B cell (primary cell): ENCODE measurements at regions of chr12 and their contacts with region 1.

Region 1: GRCh38 chr12:31238764-31239387 is 87.1 kb downstream of the SINHCAF start:
- DNase-seq: peak; percentile 71
- ATAC-seq: peak; percentile 64
- H3K4me3 ChIP-seq: no peak overlapping the region
- H3K4me3 Mint-ChIP-seq: no peak overlapping the region
- H3K27ac ChIP-seq: no peak overlapping the region
- H3K27ac Mint-ChIP-seq: no peak overlapping the region
- H3K4me1 ChIP-seq: no peaks in the 10 kb centered on the region
- H3K4me1 Mint-ChIP-seq: peaks cover 9% of the 10 kb centered on the region
- H3K27me3 ChIP-seq: peaks cover 0 to 4% (median 0%) of the 10 kb centered on the region in 4 experiments
- H3K27me3 Mint-ChIP-seq: peaks cover 25% of the 10 kb centered on the region
- CTCF ChIP-seq: peak; percentile 80

Region 2: DNA sequence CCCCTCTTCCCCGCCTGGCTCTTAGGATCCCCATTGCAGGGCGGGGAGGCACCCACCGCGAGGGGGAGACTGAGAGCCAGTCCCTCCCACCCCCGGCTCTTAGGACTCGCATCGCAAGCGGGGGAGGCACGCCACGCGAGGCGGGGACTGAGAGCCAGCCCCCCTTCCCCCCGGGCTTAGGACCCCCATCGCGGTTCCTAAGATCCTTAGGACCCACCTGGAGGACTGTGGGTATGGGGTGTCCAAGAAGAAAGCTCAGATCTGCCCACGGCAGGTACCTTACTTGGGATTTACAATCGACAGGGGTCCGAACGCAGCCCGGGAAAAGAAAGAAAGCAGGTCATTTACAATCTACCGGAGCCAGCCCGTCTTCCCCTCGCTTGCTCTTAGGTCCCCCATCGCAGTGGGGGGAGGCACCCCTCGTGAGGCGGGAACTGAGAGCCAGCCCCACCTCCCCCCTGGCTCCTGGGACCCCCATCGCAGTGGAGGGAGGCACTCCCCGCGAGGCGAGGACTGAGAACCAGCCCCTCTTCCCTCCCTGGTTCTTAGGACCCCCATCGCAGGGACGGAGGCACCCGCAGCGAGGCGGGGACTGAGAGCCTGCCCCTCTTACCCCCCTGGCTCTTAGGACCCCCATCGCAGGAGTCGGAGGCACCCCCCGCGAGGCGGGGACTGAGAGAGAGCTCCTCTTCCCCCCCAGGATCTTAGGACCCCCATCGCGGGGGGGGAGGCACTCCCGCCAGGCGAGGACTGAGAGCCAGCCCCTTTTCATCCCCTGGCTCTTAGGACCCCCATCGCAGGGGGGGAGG is 121.5 kb before region 1 on chr12:
- CTCF ChIA-PET with region 1: interaction called, 3 read pairs
- POLR2A ChIA-PET with region 1: no interaction called
- intact Hi-C with region 1: loop called (anchors 2 kb)
- DNase-seq: peak; percentile 83
- ATAC-seq: peak; percentile 76
- H3K4me3 ChIP-seq: peak overlapping the region in 4 of 5 experiments; percentile 37 to 65 (median 56)
- H3K4me3 Mint-ChIP-seq: peak overlapping the region; percentile 85
- H3K27ac ChIP-seq: no peak overlapping the region
- H3K27ac Mint-ChIP-seq: peak overlapping the region; percentile 41
- H3K4me1 ChIP-seq: peaks cover 28 to 32% of the 10 kb centered on the region in 2 donors
- H3K4me1 Mint-ChIP-seq: peaks cover 4% of the 10 kb centered on the region
- H3K27me3 ChIP-seq: peaks cover 0 to 34% (median 6%) of the 10 kb centered on the region in 4 experiments
- H3K27me3 Mint-ChIP-seq: peaks cover 2% of the 10 kb centered on the region
- CTCF ChIP-seq: peak; percentile 72

Region 3: DNA sequence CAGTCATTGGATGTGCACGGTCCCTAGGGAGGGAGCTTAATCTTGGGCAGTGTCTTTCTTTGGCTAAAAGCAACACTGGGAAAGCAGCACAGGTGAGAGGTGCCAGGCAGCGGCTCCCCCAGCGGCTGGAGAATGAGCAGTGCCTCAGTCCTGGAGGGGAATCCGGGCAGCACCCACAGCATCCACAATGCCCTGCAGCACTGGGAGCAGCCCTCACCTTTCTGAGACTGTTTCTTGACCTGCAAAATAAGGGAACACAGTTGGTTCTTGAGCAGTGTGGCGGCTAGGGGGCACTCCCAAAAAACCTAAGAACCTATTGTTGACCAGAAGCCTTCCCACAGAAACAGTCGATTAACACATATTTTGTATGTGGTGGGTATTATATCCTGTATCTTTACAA is 11.3 kb after region 1 on chr12:
- CTCF ChIA-PET with region 1: interaction called, 20 read pairs
- POLR2A ChIA-PET with region 1: no interaction called
- intact Hi-C with region 1: no loop called
- DNase-seq: no peak
- ATAC-seq: no peak
- H3K4me3 ChIP-seq: no peak overlapping the region
- H3K4me3 Mint-ChIP-seq: no peak overlapping the region
- H3K27ac ChIP-seq: no peak overlapping the region
- H3K27ac Mint-ChIP-seq: no peak overlapping the region
- H3K4me1 ChIP-seq: no peaks in the 10 kb centered on the region
- H3K4me1 Mint-ChIP-seq: no peaks in the 10 kb centered on the region
- H3K27me3 ChIP-seq: peaks cover 0 to 2% (median 0%) of the 10 kb centered on the region in 4 experiments
- H3K27me3 Mint-ChIP-seq: no peaks in the 10 kb centered on the region
- CTCF ChIP-seq: no peak

Region 4: DNA sequence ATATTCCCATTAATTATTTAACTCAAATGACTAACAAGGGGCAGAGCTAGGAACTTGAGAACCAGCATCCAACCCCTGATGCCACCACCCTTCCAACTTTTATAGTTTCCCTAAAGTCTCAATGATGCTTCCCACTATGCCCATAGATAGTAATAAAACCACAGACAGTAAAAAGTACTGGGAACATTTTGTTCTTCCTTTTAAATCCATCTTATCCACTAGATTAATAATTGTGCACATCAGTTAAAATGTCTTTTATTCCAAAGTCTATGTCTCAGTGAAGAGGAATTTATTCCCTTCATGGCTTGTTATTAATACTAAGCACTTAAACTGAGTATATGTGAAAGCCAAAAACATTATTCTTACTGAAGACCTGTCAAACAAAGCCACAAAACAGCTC is 41.3 kb after region 1 on chr12:
- CTCF ChIA-PET with region 1: no interaction called
- POLR2A ChIA-PET with region 1: no interaction called
- intact Hi-C with region 1: no loop called
- DNase-seq: no peak
- ATAC-seq: no peak
- H3K4me3 ChIP-seq: no peak overlapping the region
- H3K4me3 Mint-ChIP-seq: no peak overlapping the region
- H3K27ac ChIP-seq: no peak overlapping the region
- H3K27ac Mint-ChIP-seq: no peak overlapping the region
- H3K4me1 ChIP-seq: no peaks in the 10 kb centered on the region
- H3K4me1 Mint-ChIP-seq: no peaks in the 10 kb centered on the region
- H3K27me3 ChIP-seq: no peaks in the 10 kb centered on the region
- H3K27me3 Mint-ChIP-seq: no peaks in the 10 kb centered on the region
- CTCF ChIP-seq: no peak

Region 5: GRCh38 chr12:31931796-31932715 is 693.2 kb after region 1 on chr12:
- CTCF ChIA-PET with region 1: no interaction called
- POLR2A ChIA-PET with region 1: no interaction called
- intact Hi-C with region 1: no loop called
- DNase-seq: no peak
- ATAC-seq: no peak
- H3K4me3 ChIP-seq: no peak overlapping the region
- H3K4me3 Mint-ChIP-seq: no peak overlapping the region
- H3K27ac ChIP-seq: no peak overlapping the region
- H3K27ac Mint-ChIP-seq: no peak overlapping the region
- H3K4me1 ChIP-seq: peaks cover 11 to 15% of the 10 kb centered on the region in 2 donors
- H3K4me1 Mint-ChIP-seq: peaks cover 29% of the 10 kb centered on the region
- H3K27me3 ChIP-seq: no peaks in the 10 kb centered on the region
- H3K27me3 Mint-ChIP-seq: no peaks in the 10 kb centered on the region
- CTCF ChIP-seq: no peak